HepG2 (cell line): ENCODE measurements at regions of chr14 and their contacts with region 1.

Region 1: GRCh38 chr14:68788996-68789820 is 3.7 kb downstream of the ZFP36L1 start:
- DNase-seq: peak; percentile 75
- ATAC-seq: peak; percentile 21
- H3K4me3 ChIP-seq: peak overlapping the region; percentile 93 to 98 (median 94); a peak in 5 of 6 replicates
- H3K27ac ChIP-seq: peak overlapping the region; percentile 98
- H3K4me1 ChIP-seq: peaks cover 67% of the 10 kb centered on the region
- H3K27me3 ChIP-seq: no peaks in the 10 kb centered on the region; a peak in 1 of 5 replicates
- CTCF ChIP-seq: peak; percentile 90
- EP300 ChIP-seq: no peak
- POLR2A ChIP-seq: peak in 1 of 2 experiments; percentile 28; a peak in 1 of 4 replicates
- RAD21 ChIP-seq: peak; percentile 95

Region 2: GRCh38 chr14:68466491-68467032 is 322.6 kb before region 1 on chr14:
- CTCF ChIA-PET with region 1: no interaction called
- POLR2A ChIA-PET with region 1: interaction called, 6 read pairs
- in situ Hi-C with region 1: no loop called
- intact Hi-C with region 1: loop called (anchors 10 kb)
- DNase-seq: peak; percentile 63
- ATAC-seq: no peak
- H3K4me3 ChIP-seq: no peak overlapping the region
- H3K27ac ChIP-seq: no peak overlapping the region
- H3K4me1 ChIP-seq: peaks cover 48% of the 10 kb centered on the region
- H3K27me3 ChIP-seq: no peaks in the 10 kb centered on the region
- CTCF ChIP-seq: no peak
- EP300 ChIP-seq: no peak
- POLR2A ChIP-seq: no peak
- RAD21 ChIP-seq: no peak

Region 3: GRCh38 chr14:68718023-68718995 is 70.9 kb before region 1 on chr14:
- CTCF ChIA-PET with region 1: interaction called, 42 read pairs
- POLR2A ChIA-PET with region 1: interaction called, 41 read pairs
- in situ Hi-C with region 1: loop called (anchors 5 kb)
- intact Hi-C with region 1: loop called (anchors 1 kb)
- DNase-seq: no peak
- ATAC-seq: peak; percentile 54
- H3K4me3 ChIP-seq: no peak overlapping the region
- H3K27ac ChIP-seq: no peak overlapping the region
- H3K4me1 ChIP-seq: peaks cover 65% of the 10 kb centered on the region
- H3K27me3 ChIP-seq: no peaks in the 10 kb centered on the region
- CTCF ChIP-seq: no peak
- EP300 ChIP-seq: no peak
- POLR2A ChIP-seq: no peak
- RAD21 ChIP-seq: 0 out of 2 replicates have a peak, but pooled peaks have one; percentile 19

Region 4: DNA sequence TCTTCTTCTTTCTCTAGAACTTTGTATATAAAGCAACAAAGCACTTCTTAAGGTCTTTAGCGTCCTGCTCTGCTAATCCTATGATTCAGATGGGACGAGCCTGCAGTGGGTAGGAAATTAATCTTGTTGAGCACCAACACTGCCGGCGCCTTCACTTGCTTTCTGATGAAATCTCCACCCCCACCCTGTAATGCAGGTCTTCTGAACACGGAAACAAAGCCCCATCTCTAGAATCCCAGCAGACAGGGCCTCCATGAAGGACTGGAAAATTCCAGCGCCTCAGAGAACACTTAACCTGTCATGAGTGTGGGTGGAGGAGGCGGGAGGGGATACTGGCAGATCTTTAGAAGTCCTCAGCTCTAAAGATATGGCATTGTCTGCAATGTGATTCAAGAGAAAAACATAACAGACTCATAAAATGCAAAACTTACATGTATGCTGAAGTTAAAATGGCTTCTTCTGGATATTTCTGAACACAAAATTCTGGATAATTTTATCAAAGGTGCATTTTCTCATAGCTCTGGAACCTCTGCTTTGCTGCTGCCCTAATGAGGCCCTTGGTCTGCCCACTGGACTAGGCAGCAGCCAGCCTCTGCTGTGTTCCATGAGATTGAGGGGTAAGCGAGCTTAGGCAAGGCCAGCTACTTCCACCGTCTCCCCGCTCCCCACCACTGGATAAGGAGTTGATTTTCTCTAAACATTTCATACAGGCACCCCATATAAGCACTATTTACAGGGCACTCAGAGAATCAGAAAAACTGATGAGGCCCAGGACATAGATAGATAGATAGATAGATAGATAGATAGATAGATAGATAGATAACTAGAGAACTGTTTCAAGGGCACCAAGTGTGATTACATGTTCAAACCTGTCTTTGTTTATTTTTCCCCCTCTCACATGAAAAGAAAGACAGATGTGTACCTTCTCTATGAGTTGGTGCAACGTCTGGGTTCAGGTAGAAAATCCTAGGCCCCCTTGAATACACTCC is 39.4 kb before region 1 on chr14:
- CTCF ChIA-PET with region 1: no interaction called
- POLR2A ChIA-PET with region 1: interaction called, 10 read pairs
- in situ Hi-C with region 1: no loop called
- intact Hi-C with region 1: loop called (anchors 2 kb)
- DNase-seq: no peak
- ATAC-seq: no peak
- H3K4me3 ChIP-seq: no peak overlapping the region
- H3K27ac ChIP-seq: no peak overlapping the region
- H3K4me1 ChIP-seq: peaks cover 71% of the 10 kb centered on the region
- H3K27me3 ChIP-seq: no peaks in the 10 kb centered on the region
- CTCF ChIP-seq: no peak
- EP300 ChIP-seq: no peak
- POLR2A ChIP-seq: no peak
- RAD21 ChIP-seq: no peak

Region 5: DNA sequence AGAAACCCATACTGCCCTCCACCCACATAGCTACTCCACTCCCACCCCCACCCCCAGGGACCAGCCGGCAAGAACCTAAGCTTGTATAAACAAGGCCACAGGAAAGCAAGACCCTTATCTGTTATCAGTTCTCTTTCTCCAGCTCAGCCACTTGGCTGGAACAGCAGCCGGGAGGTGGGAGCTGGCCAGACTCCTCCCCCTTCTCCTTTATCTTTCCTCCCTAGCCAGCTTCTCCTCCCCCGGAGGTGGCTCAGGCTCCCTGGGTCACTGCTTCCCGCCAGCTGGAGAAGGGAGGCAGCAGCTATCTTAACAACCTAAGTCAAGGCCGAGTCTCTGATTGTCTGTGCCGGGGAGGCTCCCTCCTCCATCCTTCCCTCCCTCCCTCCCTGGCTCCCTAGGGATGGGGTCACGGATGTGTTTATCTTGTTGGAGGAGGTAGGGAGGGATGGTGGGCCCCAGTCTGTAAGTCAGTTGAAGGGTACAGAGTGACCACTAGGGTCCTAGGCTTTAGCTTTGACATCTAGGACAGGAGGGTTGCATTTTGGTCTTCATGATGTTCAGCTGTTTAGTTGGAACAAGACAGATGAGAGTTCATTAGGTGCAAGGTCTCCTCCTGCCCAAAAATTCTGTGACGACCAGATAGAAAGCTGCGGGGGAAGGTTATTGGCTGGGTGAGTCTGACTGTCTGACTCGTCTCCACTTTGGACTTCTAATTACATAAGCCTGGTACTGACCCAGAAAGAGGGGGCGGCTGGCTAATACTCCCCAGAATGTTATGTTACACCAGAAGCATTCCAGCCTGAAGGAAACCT is 26.0 kb before region 1 on chr14:
- CTCF ChIA-PET with region 1: no interaction called
- POLR2A ChIA-PET with region 1: interaction called, 17 read pairs
- in situ Hi-C with region 1: no loop called
- intact Hi-C with region 1: loop called (anchors 2 kb)
- DNase-seq: peak; percentile 69
- ATAC-seq: peak; percentile 77
- H3K4me3 ChIP-seq: peak overlapping the region in 2 of 3 experiments; percentile 3 to 41; a peak in 1 of 6 replicates
- H3K27ac ChIP-seq: no peak overlapping the region
- H3K4me1 ChIP-seq: peaks cover 83% of the 10 kb centered on the region
- H3K27me3 ChIP-seq: no peaks in the 10 kb centered on the region
- CTCF ChIP-seq: no peak
- EP300 ChIP-seq: peak in 1 of 2 experiments; percentile 38; a peak in 1 of 4 replicates
- POLR2A ChIP-seq: no peak
- RAD21 ChIP-seq: no peak

Region 6: GRCh38 chr14:69059658-69060623 is 270.7 kb after region 1 on chr14:
- CTCF ChIA-PET with region 1: no interaction called
- POLR2A ChIA-PET with region 1: no interaction called
- in situ Hi-C with region 1: no loop called
- intact Hi-C with region 1: no loop called
- DNase-seq: no peak
- ATAC-seq: no peak
- H3K4me3 ChIP-seq: no peak overlapping the region
- H3K27ac ChIP-seq: no peak overlapping the region
- H3K4me1 ChIP-seq: peaks cover 5% of the 10 kb centered on the region
- H3K27me3 ChIP-seq: no peaks in the 10 kb centered on the region
- CTCF ChIP-seq: no peak
- EP300 ChIP-seq: no peak
- POLR2A ChIP-seq: no peak
- RAD21 ChIP-seq: no peak